Right ventricle myocardium inferior (tissue), 1 donor: ENCODE measurements at regions of chr1 and their contacts with region 1.

Region 1: DNA sequence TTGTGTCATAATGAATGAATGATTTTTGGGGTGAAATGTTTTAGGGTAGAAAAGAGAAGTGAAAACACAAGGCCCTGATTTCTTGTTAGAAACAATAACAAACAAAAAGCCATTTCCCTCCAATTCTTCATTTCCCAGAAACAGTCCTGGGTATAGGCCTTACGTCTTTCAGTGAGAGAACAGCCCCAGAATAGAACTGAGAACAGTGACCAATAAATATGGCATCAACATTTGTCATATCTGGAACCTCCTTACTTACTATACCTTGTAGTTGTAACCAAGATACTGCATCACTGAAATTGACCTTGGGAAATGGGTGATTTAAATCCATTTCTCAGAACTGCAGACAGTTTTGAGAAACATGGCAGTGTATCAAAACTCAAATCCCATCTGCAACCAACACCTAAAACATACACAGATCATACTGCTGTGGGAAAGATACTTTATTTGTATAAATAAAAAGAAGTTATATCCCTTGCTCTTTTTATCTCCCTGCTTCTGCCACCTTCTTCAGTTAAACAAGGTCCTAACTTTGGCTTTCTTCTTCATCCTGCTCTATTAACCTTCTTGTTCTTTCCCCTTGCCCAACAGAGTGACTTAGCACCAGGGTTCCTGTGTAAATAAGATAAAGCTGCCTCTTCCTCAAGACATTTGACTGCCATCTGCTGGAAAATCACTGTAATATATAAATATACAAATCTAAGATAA is 19.5 kb downstream of the XKR8 start:
- DNase-seq: no peak
- ATAC-seq: peak; percentile 56

Region 2: GRCh38 chr1:27858072-27858958 is 121.0 kb before region 1 on chr1:
- intact Hi-C with region 1: loop called (anchors 2 kb)
- DNase-seq: peak; percentile 89
- ATAC-seq: peak; percentile 90

Region 3: DNA sequence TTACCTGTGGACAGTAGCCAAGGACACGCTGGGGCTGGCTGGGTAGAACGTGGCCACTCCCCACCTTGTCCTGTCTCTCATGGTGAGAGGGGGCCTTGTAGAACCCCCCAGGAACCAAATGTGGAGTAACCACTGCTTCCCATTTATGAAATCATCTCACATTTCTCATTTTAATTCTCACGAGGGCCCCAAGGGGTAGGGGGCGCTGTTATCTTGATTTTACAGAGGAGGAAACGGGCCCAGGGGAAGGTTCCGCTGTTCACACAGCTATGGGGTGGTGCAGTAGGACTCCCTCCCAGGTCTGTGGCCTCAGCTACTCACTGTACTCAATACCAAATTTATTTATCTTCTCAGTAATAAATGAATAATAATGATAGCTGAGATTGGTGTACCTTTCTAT is 39.0 kb before region 1 on chr1:
- intact Hi-C with region 1: loop called (anchors 5 kb)
- DNase-seq: peak; percentile 81
- ATAC-seq: no peak